ENCODE measurements at regions of chr20 and their contacts with region 1.

Region 1: GRCh38 chr20:16615199-16615598 is 42.0 kb upstream of the KIF16B start:
- DNase-seq: peak; percentile 90
- H3K4me3 Mint-ChIP-seq: no peak overlapping the region
- H3K27ac Mint-ChIP-seq: peak overlapping the region; percentile 65
- H3K4me1 Mint-ChIP-seq: peaks cover 21% of the 10 kb centered on the region
- H3K27me3 Mint-ChIP-seq: no peaks in the 10 kb centered on the region
- CTCF ChIP-seq: no peak

Region 2: GRCh38 chr20:16205502-16205901 is 409.7 kb before region 1 on chr20:
- CTCF ChIA-PET with region 1: no interaction called
- POLR2A ChIA-PET with region 1: no interaction called
- intact Hi-C with region 1: no loop called
- DNase-seq: no peak
- H3K4me3 Mint-ChIP-seq: no peak overlapping the region
- H3K27ac Mint-ChIP-seq: no peak overlapping the region
- H3K4me1 Mint-ChIP-seq: no peaks in the 10 kb centered on the region
- H3K27me3 Mint-ChIP-seq: no peaks in the 10 kb centered on the region
- CTCF ChIP-seq: no peak

Region 3: DNA sequence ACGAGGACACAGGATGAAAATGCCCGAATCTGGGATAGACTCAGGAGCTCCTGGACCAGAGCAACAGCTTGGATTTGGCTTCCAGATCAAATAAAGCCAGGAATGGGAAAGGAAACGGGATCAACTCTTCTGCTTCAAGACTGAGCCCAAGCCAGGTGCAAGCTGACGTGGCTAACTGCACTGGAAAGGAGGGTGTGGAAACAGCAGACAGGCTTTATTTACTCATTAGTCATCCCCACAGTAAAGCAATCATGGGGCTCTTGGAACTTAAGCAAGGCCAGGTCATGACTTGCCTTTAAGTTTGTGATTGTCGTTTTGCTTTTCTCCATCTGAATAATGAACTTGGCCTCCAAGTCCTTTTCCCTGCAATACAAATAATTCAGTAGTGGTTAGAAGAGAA is 87.1 kb before region 1 on chr20:
- CTCF ChIA-PET with region 1: no interaction called
- POLR2A ChIA-PET with region 1: interaction called, 10 read pairs
- intact Hi-C with region 1: no loop called
- DNase-seq: peak; percentile 94
- H3K4me3 Mint-ChIP-seq: peak overlapping the region; percentile 40
- H3K27ac Mint-ChIP-seq: peak overlapping the region; percentile 91
- H3K4me1 Mint-ChIP-seq: peaks cover 34% of the 10 kb centered on the region
- H3K27me3 Mint-ChIP-seq: no peaks in the 10 kb centered on the region
- CTCF ChIP-seq: no peak

Region 4: DNA sequence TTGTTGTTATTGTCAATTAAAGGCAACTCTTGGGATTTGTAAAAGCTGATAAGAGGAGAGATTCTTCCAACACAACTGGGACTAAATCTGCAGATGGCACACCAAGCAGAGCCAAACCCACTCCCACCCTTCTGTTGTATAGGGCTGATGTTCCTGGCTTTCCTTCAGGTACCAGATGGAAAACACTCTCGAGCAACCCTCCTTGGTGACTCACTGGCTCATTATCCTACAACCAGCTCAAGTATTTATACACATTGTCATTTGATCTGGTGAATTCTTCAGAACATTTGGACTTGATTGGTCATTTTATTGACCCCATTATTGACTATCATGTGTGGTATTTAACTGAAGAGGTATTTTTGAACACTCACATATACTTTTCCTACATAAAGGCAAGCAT is 421.3 kb after region 1 on chr20:
- CTCF ChIA-PET with region 1: no interaction called
- POLR2A ChIA-PET with region 1: no interaction called
- intact Hi-C with region 1: no loop called
- DNase-seq: no peak
- H3K4me3 Mint-ChIP-seq: no peak overlapping the region
- H3K27ac Mint-ChIP-seq: no peak overlapping the region
- H3K4me1 Mint-ChIP-seq: no peaks in the 10 kb centered on the region
- H3K27me3 Mint-ChIP-seq: peaks cover under 1% of the 10 kb centered on the region
- CTCF ChIP-seq: no peak